Mammary epithelial cell (primary cell): ENCODE measurements at regions of chr4 and their contacts with region 1.

Region 1: DNA sequence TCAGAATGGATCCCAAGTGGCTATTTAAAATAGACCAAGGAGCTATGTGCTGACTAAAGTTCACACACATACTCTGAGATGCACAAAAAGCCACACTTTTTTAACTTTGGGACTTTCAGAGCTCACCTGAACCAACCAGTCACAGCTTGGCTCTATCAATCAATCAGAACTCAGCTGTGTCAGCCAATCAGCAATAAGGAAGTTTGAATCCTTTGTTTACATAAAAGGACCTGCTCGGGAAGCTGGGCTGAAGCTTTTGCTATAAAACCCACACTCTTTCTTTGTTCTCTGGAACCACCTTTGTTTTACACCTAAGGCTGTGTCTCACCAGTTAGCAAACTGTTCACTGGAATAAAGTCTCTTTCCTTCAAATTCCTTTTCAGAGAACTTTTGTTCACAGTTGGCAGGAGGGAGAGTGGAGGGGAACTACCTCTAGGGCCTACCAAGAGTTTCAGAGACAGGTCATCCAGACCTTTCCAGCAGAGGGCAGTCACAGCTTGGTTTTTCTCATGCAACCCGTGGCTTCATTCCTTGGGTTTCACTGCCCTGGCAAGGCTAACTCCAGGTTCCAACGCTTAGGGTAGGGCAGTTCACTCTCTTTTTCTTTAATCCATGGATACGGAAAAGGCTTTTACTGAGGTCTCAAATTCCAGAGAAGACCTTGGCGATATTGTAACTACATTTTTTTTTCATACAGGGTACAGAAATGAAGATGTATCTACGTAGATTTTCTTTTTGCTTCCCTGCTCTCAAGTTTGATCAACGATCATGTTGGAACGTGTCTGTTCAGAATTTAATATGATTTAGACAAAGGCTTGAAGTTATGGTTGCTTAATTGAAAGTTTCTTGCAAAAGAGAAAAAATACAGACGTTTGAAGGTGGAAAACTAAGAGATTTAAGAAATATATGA is 80.7 kb downstream of the GPRIN3 start:
- DNase-seq: peak; percentile 82
- H3K4me3 ChIP-seq: peak overlapping the region; percentile 4 to 24 (median 5)
- H3K27ac ChIP-seq: peak overlapping the region; percentile 38
- H3K4me1 ChIP-seq: no peaks in the 10 kb centered on the region
- H3K27me3 ChIP-seq: no peaks in the 10 kb centered on the region
- CTCF ChIP-seq: peak; percentile 82 to 84

Region 2: DNA sequence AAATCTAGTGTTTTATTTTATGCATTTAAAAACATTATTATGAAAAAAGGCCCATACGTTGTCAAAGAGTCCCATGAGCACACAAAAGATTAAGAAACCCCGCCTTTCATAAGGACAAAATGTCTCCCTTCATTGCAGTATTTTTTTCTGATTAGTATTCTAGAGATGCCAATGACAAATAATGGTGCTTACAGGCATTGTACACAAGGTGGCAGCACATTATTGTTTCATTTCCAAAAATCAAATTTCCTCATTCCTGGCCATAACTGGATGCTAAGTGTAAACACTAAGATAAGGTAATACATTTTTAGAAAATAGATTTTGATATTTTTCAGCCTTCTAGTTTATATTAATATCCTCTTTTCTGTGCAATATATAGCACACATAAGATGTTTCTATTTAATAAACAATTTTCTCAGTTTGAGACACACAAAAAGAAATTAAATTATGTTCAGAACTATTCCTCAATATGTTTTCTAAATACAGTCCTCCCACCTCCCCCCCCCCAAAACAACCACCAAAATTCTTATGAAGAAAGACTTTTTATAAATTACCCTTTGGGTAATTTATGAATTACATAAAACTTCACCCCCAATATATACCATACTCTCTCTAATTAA is 67.9 kb before region 1 on chr4:
- CTCF ChIA-PET with region 1: interaction called, 3 read pairs
- dilution Hi-C with region 1: no loop called
- in situ Hi-C with region 1: no loop called
- intact Hi-C with region 1: loop called (anchors 5 kb)
- DNase-seq: peak; percentile 35
- H3K4me3 ChIP-seq: no peak overlapping the region
- H3K27ac ChIP-seq: no peak overlapping the region
- H3K4me1 ChIP-seq: no peaks in the 10 kb centered on the region
- H3K27me3 ChIP-seq: no peaks in the 10 kb centered on the region
- CTCF ChIP-seq: peak; percentile 69 to 76

Region 3: DNA sequence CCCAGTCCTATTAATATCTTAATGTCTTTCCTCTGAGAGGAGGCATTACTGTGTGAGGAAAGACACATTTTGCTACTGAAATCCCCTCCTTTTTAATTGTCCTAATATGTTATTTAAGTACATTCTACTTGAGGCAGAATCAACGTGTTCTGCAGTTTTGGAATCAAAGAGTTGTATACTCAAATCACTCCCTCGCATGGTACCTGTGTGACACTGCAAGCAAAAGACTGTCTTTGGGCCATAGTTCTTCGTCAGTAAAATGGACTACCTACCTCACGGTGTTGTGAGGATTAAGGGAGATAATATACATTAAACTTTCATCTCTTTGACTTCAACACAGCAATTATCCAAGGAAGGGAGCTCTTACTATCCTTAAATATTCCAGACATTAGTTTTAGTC is 54.1 kb before region 1 on chr4:
- CTCF ChIA-PET with region 1: no interaction called
- dilution Hi-C with region 1: no loop called
- in situ Hi-C with region 1: no loop called
- intact Hi-C with region 1: no loop called
- DNase-seq: no peak
- H3K4me3 ChIP-seq: no peak overlapping the region
- H3K27ac ChIP-seq: no peak overlapping the region
- H3K4me1 ChIP-seq: no peaks in the 10 kb centered on the region
- H3K27me3 ChIP-seq: peaks cover 6% of the 10 kb centered on the region
- CTCF ChIP-seq: no peak

Region 4: DNA sequence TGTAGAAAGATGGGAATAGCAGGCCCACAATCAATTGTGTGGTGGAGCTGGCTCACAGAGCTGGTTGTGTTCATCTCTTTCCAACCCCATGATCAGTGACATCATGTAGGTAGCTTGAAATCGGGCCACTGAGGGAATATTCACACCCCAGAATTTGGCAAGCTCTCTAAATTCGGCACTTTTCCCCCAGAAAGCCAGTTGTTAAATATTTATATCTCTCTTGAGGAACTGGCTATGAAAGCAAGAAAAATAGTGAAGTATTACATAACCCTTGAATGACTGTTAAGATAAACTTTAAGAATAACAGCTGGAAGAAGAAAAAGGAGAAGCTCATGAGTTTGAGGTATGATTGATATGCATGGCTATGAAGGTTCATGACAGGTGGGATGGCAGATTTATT is 41.8 kb after region 1 on chr4:
- CTCF ChIA-PET with region 1: no interaction called
- dilution Hi-C with region 1: no loop called
- in situ Hi-C with region 1: no loop called
- intact Hi-C with region 1: no loop called
- DNase-seq: no peak
- H3K4me3 ChIP-seq: no peak overlapping the region
- H3K27ac ChIP-seq: no peak overlapping the region
- H3K4me1 ChIP-seq: no peaks in the 10 kb centered on the region
- H3K27me3 ChIP-seq: no peaks in the 10 kb centered on the region
- CTCF ChIP-seq: no peak

Region 5: DNA sequence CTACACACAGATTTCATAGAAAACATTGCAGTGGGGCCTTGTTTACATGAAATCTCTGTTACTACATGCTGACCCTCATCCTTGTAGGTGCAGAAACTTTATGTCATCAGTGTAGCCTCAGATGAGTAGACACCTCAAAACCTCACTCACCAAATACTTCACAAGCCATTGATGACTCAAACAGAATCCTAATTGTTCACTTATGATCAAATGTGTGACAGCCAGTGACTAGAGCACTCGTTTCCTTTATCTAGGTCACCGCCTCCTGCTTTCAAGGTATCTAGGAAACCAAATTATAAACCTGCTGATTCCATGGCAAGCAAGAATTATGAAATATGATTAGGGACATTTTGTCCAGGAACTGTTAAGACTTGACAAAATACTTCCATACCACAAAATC is 336.5 kb after region 1 on chr4:
- CTCF ChIA-PET with region 1: no interaction called
- dilution Hi-C with region 1: no loop called
- in situ Hi-C with region 1: no loop called
- intact Hi-C with region 1: loop called (anchors 10 kb)
- DNase-seq: peak; percentile 55
- H3K4me3 ChIP-seq: no peak overlapping the region
- H3K27ac ChIP-seq: no peak overlapping the region
- H3K4me1 ChIP-seq: no peaks in the 10 kb centered on the region
- H3K27me3 ChIP-seq: no peaks in the 10 kb centered on the region
- CTCF ChIP-seq: no peak